ENCODE measurements at regions of chr14 and their contacts with region 1.

Region 1: GRCh38 chr14:101992708-101993107 is 28.3 kb downstream of the DYNC1H1 start:
- DNase-seq: peak; percentile 72
- CTCF ChIP-seq: peak; percentile 50

Region 2: GRCh38 chr14:101791919-101792572 is 200.7 kb before region 1 on chr14:
- CTCF ChIA-PET with region 1: no interaction called
- POLR2A ChIA-PET with region 1: no interaction called
- DNase-seq: peak; percentile 40
- CTCF ChIP-seq: no peak

Region 3: GRCh38 chr14:101927859-101928258 is 64.8 kb before region 1 on chr14:
- CTCF ChIA-PET with region 1: no interaction called
- POLR2A ChIA-PET with region 1: no interaction called
- DNase-seq: no peak
- CTCF ChIP-seq: no peak

Region 4: GRCh38 chr14:101972268-101972774 is 20.4 kb before region 1 on chr14:
- CTCF ChIA-PET with region 1: interaction called, 19 read pairs
- POLR2A ChIA-PET with region 1: interaction called, 4 read pairs
- DNase-seq: no peak
- CTCF ChIP-seq: no peak

Region 5: DNA sequence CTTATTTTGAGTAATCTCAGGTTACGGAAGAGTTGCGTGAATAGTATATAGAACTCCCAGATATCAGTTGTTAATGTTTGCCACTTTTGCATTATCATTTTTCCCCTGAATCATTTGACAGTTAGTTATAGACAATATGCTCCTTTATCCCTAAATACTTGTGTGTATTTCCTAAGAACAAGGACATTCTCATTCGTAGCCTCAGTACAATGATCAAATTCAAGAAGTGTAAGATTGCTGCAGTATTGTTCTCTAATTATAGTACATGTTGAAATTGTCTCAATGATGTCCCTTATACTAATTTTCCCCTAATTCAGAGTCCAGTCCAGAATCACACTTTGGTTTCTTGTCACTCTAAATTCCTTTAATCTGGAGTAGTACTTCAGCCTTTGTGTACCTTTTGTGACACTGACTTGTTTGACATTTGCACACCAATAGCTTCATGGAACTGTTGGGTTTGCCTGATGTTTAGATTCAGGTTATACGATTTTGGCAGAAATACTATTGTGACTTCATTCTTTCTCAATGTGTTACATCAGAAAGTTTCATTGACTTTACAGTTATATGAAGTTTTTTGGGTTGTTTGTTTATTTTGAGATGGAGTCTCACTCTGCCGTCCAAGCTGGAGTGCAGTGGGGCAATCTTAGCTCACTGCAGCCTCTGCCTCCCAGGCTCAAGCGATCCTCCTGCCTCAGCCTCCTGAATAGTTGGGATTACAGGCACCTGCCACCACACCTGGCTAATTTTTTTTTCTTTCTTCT is 15.2 kb before region 1 on chr14:
- CTCF ChIA-PET with region 1: interaction called, 19 read pairs
- POLR2A ChIA-PET with region 1: interaction called, 4 read pairs
- DNase-seq: no peak
- CTCF ChIP-seq: no peak

Region 6: GRCh38 chr14:102221026-102221425 is 228.3 kb after region 1 on chr14:
- CTCF ChIA-PET with region 1: no interaction called
- POLR2A ChIA-PET with region 1: no interaction called
- DNase-seq: no peak
- CTCF ChIP-seq: no peak

Measured in GM10248 (cell line).